Cardiac septum (tissue), 1 donor: ENCODE measurements at regions of chr3 and their contacts with region 1.

Region 1: DNA sequence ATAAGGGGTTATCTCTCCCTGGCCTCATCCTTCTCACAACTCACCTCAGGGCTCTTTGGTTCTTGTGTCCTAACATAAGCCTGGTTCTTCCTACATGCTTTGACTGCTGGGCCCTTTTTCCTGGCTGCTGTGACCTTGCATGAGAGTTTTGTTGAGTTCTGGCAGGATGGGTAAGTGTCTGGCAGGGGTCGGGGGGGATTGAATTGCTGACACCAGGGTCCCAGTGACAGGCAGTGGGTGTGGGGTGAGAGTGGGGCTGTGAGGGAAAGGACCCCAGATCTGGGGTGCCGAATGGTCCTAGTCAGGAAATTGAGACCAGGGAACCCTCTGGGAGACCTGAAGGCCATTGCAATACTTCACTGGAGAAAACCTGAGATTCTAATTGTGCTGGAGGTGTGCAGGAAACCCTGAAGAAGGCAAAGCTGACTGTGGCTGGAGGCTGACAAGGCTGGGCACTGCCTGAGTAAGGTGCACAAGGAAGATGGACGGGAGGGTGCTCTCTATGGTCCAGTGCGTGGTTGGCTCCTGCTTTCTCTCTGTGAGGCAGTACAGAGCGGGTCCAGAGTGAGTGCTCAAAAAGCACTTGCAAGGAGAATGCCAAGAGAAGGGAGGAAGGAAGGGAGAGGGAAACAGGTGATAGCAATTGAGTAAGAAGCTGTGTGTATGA is 76.8 kb downstream of the CLSTN2 start:
- DNase-seq: no peak

Region 2: GRCh38 chr3:139975594-139976365 is 36.0 kb before region 1 on chr3:
- intact Hi-C with region 1: loop called (anchors 2 kb)
- DNase-seq: no peak